ENCODE measurements at regions of chr14 and their contacts with region 1.

Region 1: GRCh38 chr14:93115069-93115820 is 480 bp downstream of the ITPK1 start:
- DNase-seq: peak; percentile 95
- ATAC-seq: peak; percentile 94

Region 2: GRCh38 chr14:92951912-92952471 is 163.3 kb before region 1 on chr14:
- intact Hi-C with region 1: loop called (anchors 2 kb)
- DNase-seq: peak; percentile 90
- ATAC-seq: peak; percentile 69

Region 3: GRCh38 chr14:92973261-92973797 is 141.9 kb before region 1 on chr14:
- intact Hi-C with region 1: loop called (anchors 1 kb)
- DNase-seq: peak; percentile 87
- ATAC-seq: peak; percentile 93

Region 4: DNA sequence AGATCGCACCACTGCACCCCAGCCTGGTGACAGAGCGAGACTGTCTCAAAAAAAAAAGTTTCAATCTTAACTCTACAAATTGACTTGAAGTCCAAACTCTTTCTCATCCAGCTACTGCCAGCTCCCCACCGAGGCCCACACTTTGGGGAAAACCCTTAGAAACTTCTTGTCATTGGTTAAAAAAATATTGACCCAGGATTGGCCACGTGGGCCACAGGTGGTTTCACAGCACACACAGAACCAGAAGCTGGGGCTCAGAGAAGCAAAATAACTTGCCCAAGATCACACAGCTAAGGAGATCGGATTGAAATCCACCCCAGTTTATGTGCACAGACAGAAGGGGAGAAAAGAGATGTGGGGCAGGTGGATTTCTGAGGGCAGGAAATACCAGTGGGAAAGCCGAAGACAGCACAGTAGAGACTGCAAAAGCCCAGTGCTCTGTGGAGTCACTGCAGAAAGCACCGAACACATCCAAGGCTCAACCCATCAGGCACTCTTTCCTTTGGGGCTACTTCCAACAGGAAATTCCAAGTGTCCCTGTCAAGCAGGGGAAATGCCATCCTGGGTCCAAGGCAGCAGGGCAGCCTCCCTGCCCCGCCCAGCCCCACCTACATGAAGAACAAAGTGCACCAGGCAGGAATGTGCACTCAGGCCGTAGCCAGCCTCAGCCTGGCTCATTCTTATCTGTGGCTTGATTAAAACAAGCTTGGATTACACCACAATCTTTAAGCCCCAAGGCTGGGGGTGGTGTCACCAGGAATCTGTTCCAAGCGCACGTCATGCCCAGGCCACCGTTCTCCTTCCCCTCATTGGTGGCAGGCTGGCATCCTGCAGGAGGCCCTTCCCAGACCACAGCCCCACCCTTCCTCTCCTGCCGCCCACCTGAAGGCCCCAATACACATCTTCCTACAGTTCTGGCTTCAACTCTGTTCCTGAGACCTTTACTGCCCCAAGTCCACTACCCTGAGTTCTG is 72.0 kb before region 1 on chr14:
- intact Hi-C with region 1: loop called (anchors 2 kb)
- DNase-seq: no peak
- ATAC-seq: peak; percentile 74

Region 5: GRCh38 chr14:93059917-93060545 is 55.2 kb before region 1 on chr14:
- intact Hi-C with region 1: loop called (anchors 5 kb)
- DNase-seq: no peak
- ATAC-seq: peak; percentile 30

Region 6: GRCh38 chr14:93206793-93207467 is 91.7 kb after region 1 on chr14 and contains the starts of genes GON7 and UBR7:
- intact Hi-C with region 1: loop called (anchors 2 kb)
- DNase-seq: peak; percentile 96
- ATAC-seq: peak; percentile 99
- total RNA-seq, gene GON7: 15.6 TPM
- total RNA-seq, gene UBR7: 20.5 TPM

Measured in Right ventricle myocardium inferior (tissue), 1 donor.